ENCODE measurements at regions of chr7 and their contacts with region 1.

Region 1: DNA sequence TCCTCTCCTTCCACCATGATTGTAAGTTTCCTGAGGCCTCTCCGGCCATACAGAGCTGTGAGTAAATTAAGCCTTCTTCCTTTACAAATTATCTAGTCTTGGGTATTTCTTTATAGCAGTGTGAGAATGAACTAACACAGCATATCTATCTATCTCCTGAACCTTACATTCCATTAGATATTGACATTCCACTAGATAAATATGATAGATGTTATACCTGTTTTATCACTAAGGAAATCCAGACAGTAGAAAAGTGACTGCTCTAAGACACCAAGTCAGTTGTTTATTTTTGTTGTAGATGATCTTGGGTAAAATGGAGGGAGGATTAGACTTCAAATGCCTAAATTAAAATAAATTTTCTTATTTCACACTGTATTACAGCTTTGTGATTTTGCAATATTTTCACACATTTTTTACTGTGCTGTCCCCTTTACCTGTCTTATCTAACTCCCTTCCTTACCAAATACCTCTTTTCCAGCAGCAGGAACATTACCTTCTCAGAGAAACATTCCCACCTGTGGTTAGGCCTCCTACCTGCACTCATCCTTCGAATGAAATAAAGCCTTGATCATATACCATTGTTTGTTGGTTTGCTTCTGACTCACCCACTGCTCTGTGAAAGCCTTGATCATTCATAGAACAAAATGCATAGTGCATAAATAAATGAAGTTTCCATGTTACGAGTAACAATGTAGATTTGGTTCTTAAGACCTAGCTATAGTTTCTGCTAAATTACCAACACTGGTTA is 256.2 kb downstream of the ARL4A start:
- DNase-seq: peak; percentile 77
- H3K4me3 ChIP-seq: no peak overlapping the region
- H3K27ac ChIP-seq: no peak overlapping the region
- H3K4me1 ChIP-seq: peaks cover 16% of the 10 kb centered on the region
- H3K27me3 ChIP-seq: no peaks in the 10 kb centered on the region
- CTCF ChIP-seq: no peak

Region 2: GRCh38 chr7:12729112-12729511 is 214.5 kb before region 1 on chr7:
- CTCF ChIA-PET with region 1: no interaction called
- dilution Hi-C with region 1: no loop called
- in situ Hi-C with region 1: no loop called
- intact Hi-C with region 1: no loop called
- DNase-seq: no peak
- H3K4me3 ChIP-seq: no peak overlapping the region
- H3K27ac ChIP-seq: no peak overlapping the region
- H3K4me1 ChIP-seq: peaks cover 13% of the 10 kb centered on the region
- H3K27me3 ChIP-seq: no peaks in the 10 kb centered on the region
- CTCF ChIP-seq: no peak

Region 3: DNA sequence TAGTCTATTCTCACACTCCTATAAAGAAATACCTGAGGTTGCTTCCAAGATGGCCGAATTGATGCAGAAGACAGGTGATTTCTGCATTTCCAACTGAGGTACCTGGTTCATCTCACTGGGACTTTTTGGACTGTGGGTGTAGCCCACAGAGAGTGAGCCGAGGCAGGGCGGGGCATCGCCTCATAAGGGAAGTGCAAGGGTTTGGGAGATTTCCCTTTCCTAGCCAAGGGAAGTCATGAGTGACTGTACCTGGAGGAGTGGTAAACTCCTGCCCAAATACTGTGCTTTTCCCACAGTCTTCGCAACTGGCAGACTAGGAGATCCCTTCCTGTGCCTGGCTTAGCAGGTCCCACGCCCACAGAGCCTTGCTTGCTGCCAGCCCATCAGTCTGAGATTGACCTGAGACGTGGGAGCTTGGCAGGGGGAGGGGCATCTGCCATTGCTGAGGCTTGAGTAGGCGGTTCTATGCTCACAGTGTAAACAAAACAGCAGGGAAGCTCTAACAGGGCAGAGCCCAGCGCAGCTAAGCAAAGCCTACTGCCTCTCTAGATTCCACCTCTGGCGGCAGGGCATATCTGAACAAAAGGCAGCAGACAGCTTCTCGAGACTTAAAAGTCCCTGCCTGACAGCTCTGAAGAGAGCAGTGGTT is 104.0 kb before region 1 on chr7:
- CTCF ChIA-PET with region 1: interaction called, 13 read pairs
- dilution Hi-C with region 1: no loop called
- in situ Hi-C with region 1: no loop called
- intact Hi-C with region 1: no loop called
- DNase-seq: no peak
- H3K4me3 ChIP-seq: no peak overlapping the region
- H3K27ac ChIP-seq: no peak overlapping the region
- H3K4me1 ChIP-seq: no peaks in the 10 kb centered on the region
- H3K27me3 ChIP-seq: no peaks in the 10 kb centered on the region
- CTCF ChIP-seq: no peak

Region 4: DNA sequence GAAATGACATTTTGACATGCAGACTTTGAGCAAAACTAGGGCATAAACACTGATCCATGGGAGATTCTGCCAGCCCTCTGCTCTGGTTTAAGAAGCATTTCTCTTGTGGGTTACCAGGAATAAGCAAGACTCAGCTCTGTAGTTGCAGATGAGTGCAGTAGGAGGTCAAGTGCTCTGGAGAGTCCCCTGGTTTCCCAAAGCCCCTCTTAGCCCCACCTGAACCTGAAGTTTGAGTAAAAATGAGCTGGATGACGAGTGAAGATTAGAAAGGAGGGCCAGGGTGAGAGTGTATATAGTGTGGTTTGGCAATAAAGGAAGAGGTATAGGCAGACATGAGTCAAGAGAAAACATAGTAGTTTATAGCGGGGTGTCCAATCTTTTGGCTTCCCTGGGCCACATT is 35.8 kb before region 1 on chr7:
- CTCF ChIA-PET with region 1: no interaction called
- dilution Hi-C with region 1: no loop called
- in situ Hi-C with region 1: no loop called
- intact Hi-C with region 1: no loop called
- DNase-seq: no peak
- H3K4me3 ChIP-seq: no peak overlapping the region
- H3K27ac ChIP-seq: no peak overlapping the region
- H3K4me1 ChIP-seq: peaks cover 22% of the 10 kb centered on the region
- H3K27me3 ChIP-seq: no peaks in the 10 kb centered on the region
- CTCF ChIP-seq: no peak

Region 5: DNA sequence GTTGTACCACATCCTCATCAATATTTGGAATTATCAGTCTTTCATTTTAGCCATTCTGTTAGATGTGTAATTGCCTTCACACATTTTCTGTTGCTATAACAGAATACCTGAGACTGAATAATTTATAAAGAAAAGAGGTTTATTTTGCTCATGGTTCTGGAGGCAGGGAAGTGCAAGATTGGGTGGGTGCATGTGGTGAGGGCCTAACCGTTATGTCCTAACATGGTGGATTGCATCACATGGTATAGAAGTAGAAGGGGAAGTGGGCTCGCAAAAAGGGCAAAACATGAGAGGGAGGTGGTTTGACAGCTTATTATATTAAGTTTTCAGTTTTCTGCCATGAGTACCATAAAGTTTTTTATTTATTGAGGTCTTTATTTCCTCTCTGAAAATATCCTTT is 195.8 kb after region 1 on chr7:
- CTCF ChIA-PET with region 1: no interaction called
- dilution Hi-C with region 1: no loop called
- in situ Hi-C with region 1: no loop called
- intact Hi-C with region 1: no loop called
- DNase-seq: no peak
- H3K4me3 ChIP-seq: no peak overlapping the region
- H3K27ac ChIP-seq: no peak overlapping the region
- H3K4me1 ChIP-seq: no peaks in the 10 kb centered on the region
- H3K27me3 ChIP-seq: no peaks in the 10 kb centered on the region
- CTCF ChIP-seq: no peak

Measured in mammary epithelial cell (primary cell).